Activated naive CD4-positive, alpha-beta T cell treated with anti-CD3 and anti-CD28 coated beads for 36 hours (primary cell): ENCODE measurements at regions of chr12 and their contacts with region 1.

Region 1: GRCh38 chr12:100142851-100143559 is at the start of gene BLTP3B:
- DNase-seq: peak; percentile 93
- H3K4me3 Mint-ChIP-seq: peak within 1 kb of the TSS; percentile 91
- H3K27ac Mint-ChIP-seq: peak within 1 kb of the TSS; percentile 97
- H3K4me1 Mint-ChIP-seq: peaks cover 36% of the 10 kb centered on the region
- H3K27me3 Mint-ChIP-seq: no peaks in the 10 kb centered on the region
- total RNA-seq, gene BLTP3B: 27.0 to 27.2 TPM

Region 2: GRCh38 chr12:98503592-98504367 is 1639.2 kb before region 1 on chr12:
- CTCF ChIA-PET with region 1: no interaction called
- intact Hi-C with region 1: loop called (anchors 2 kb)
- DNase-seq: peak; percentile 97
- H3K4me3 Mint-ChIP-seq: peak overlapping the region; percentile 97
- H3K27ac Mint-ChIP-seq: peak overlapping the region; percentile 100
- H3K4me1 Mint-ChIP-seq: peaks cover 16% of the 10 kb centered on the region
- H3K27me3 Mint-ChIP-seq: peaks cover 8% of the 10 kb centered on the region

Region 3: DNA sequence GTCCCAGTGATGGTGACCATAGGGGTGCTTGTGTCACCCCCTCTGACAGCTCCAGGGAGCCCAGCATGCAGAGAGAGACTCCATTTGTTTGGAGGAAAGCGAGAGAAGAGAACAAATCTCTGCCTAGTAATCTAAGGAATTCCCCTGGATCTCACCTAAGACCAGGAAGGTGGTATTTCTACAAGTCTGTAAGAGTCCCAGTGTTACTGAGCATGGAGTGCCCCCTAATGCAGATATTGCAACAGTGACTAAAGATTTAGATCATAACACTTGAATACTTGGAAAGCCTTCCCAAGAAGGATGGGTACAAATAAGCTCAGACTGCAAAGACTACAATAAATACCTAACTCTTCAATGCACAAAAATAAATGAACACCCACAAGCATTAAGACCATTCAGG is 855.9 kb before region 1 on chr12:
- CTCF ChIA-PET with region 1: no interaction called
- intact Hi-C with region 1: no loop called
- DNase-seq: no peak
- H3K4me3 Mint-ChIP-seq: no peak overlapping the region
- H3K27ac Mint-ChIP-seq: no peak overlapping the region
- H3K4me1 Mint-ChIP-seq: no peaks in the 10 kb centered on the region
- H3K27me3 Mint-ChIP-seq: no peaks in the 10 kb centered on the region

Region 4: GRCh38 chr12:100128512-100128908 is 14.5 kb before region 1 on chr12:
- CTCF ChIA-PET with region 1: interaction called, 4 read pairs
- intact Hi-C with region 1: loop called (anchors 1 kb)
- DNase-seq: peak; percentile 9
- H3K4me3 Mint-ChIP-seq: no peak overlapping the region
- H3K27ac Mint-ChIP-seq: no peak overlapping the region
- H3K4me1 Mint-ChIP-seq: peaks cover 30% of the 10 kb centered on the region
- H3K27me3 Mint-ChIP-seq: no peaks in the 10 kb centered on the region

Region 5: GRCh38 chr12:100163416-100164152 is 20.6 kb after region 1 on chr12:
- CTCF ChIA-PET with region 1: no interaction called
- intact Hi-C with region 1: loop called (anchors 2 kb)
- DNase-seq: peak; percentile 81
- H3K4me3 Mint-ChIP-seq: peak overlapping the region; percentile 60
- H3K27ac Mint-ChIP-seq: no peak overlapping the region
- H3K4me1 Mint-ChIP-seq: peaks cover 6% of the 10 kb centered on the region
- H3K27me3 Mint-ChIP-seq: no peaks in the 10 kb centered on the region

Region 6: GRCh38 chr12:100573292-100574186 is 430.5 kb after region 1 on chr12 and contains the start of gene GAS2L3:
- CTCF ChIA-PET with region 1: no interaction called
- intact Hi-C with region 1: loop called (anchors 2 kb)
- DNase-seq: peak; percentile 67
- H3K4me3 Mint-ChIP-seq: peak within 1 kb of the TSS; percentile 91
- H3K27ac Mint-ChIP-seq: no peak within 1 kb of the TSS
- H3K4me1 Mint-ChIP-seq: peaks cover 8% of the 10 kb centered on the region
- H3K27me3 Mint-ChIP-seq: peaks cover 30% of the 10 kb centered on the region
- total RNA-seq, gene GAS2L3: 4.7 to 5.5 TPM